ENCODE measurements at regions of chr6 and their contacts with region 1.

Region 1: DNA sequence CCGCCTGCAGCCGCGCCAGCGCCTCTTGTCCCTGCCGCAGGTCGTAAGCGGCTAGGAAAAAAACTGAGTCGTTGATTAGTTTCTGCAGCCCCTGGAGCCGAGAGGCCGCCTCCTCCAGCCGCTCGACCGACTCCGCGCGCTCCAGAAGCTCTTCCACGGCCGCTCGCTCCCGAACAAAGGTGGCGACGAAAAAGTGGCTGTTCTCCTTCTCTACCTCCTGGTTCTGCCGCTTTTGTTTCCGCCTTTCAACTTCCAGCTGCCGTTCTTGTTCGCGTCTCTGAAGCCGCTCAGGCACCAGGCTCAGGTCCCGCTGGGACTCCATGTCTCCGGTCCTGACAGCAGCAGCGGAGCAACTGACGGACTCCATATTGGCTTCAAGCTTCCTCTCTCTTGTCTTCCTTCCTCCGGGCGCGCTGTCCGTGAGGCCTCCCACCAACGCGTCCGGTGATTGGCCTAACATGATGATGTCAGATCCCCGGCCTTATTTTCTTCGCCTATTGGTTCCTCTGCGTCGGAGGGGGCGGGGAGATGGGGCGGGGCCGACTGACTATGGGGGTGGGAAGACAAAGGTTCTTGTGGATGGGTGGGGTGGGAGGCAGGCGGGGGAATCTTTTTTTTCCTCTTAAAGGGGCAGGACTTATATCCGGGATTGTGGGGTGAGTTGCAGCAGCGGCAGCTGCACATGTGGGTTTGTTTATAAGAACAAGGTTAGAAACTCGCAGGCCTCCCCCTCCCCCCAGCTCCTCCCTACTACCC is at the start of gene TBCC:
- DNase-seq: peak; percentile 86 to 98 (median 92)
- ATAC-seq: peak; percentile 77
- H3K4me3 ChIP-seq: peak within 1 kb of the TSS; percentile 96
- H3K4me3 Mint-ChIP-seq: peak within 1 kb of the TSS; percentile 100
- H3K27ac ChIP-seq: peak within 1 kb of the TSS; percentile 89 to 94
- H3K27ac Mint-ChIP-seq: peak within 1 kb of the TSS; percentile 96
- H3K4me1 ChIP-seq: peaks cover 43% of the 10 kb centered on the region
- H3K4me1 Mint-ChIP-seq: peaks cover 35% of the 10 kb centered on the region
- H3K27me3 ChIP-seq: no peaks in the 10 kb centered on the region
- H3K27me3 Mint-ChIP-seq: no peaks in the 10 kb centered on the region
- CTCF ChIP-seq: no peak
- total RNA-seq, gene TBCC: 67.3 to 68.3 TPM

Region 2: DNA sequence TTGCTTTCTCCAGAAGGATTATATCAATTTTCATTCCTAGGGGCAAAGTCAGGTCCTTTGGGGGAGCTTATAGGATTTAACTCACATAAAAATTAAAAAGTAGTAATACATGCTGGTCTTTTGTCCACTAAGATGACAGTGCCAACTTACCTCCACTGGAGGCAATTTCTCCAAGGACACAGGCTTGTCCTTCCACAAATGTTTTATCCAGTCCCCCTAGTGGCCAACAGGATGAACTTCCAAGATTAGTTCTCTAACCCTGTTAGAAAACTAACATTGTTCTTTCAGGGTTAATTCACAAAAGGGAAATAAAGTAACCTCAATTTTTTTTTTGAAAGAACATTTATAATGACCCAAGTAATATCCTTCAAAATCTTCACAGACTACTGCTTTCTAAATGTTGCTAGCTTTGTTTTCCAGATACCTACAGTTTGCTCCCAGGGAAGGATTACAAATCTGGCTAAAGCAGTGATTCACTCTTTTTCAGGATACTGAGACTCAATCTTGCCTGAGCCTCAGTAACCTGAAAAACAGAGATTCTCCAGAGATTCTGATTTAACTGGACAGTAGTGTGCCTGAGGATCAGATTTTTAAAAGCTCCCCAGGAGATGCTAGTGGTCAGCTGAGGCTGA is 213.7 kb before region 1 on chr6:
- CTCF ChIA-PET with region 1: no interaction called
- POLR2A ChIA-PET with region 1: no interaction called
- intact Hi-C with region 1: no loop called
- DNase-seq: peak in 5 of 14 experiments; percentile 5 to 73 (median 62)
- ATAC-seq: peak; percentile 54
- H3K4me3 ChIP-seq: no peak overlapping the region
- H3K4me3 Mint-ChIP-seq: no peak overlapping the region
- H3K27ac ChIP-seq: no peak overlapping the region
- H3K27ac Mint-ChIP-seq: no peak overlapping the region
- H3K4me1 ChIP-seq: no peaks in the 10 kb centered on the region
- H3K4me1 Mint-ChIP-seq: no peaks in the 10 kb centered on the region
- H3K27me3 ChIP-seq: no peaks in the 10 kb centered on the region
- H3K27me3 Mint-ChIP-seq: no peaks in the 10 kb centered on the region
- CTCF ChIP-seq: peak; percentile 91

Region 3: DNA sequence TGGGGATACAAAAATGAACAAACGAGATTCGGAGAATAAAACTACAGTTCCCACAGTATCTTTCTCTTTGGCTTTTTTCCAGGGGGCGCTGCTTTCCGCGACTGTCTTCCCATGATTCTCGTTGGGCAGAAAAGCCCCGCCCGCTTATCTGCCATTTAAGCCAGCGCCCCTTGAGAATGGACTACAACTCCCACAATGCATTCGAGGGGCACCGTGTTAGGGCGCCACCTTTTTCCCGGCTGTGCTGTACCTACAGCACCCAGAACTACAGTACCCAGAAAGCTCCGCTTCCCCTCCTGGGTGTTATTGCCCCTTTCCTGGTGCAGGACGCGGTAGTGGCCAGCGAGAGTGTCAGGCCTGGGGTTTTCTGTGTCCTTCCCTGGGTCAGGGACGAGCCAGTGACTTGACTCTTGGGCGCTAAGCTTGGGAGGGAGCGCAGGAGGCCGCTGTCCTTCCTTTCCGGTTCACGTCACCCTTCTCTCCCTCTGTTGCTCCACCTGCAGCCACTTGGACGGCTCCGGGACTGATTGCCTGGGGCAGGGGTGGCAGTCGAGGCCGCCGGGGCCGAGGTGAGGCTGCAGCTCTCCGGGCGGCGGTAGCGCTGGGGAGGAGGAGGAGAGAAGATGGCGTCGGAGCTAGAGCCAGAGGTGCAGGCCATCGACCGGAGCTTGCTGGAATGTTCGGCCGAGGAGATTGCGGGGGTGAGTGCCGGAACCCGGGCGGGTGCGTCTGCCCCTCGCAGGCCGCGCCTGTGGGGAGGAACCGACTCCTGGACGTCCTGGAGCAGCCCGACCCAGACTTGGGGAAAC is 182.0 kb before region 1 on chr6 and contains the start of gene UBR2:
- CTCF ChIA-PET with region 1: no interaction called
- POLR2A ChIA-PET with region 1: interaction called, 18 read pairs
- intact Hi-C with region 1: no loop called
- DNase-seq: peak; percentile 81 to 98 (median 90)
- ATAC-seq: peak; percentile 95
- H3K4me3 ChIP-seq: peak within 1 kb of the TSS; percentile 99
- H3K4me3 Mint-ChIP-seq: peak within 1 kb of the TSS; percentile 98
- H3K27ac ChIP-seq: peak within 1 kb of the TSS; percentile 87 to 93
- H3K27ac Mint-ChIP-seq: peak within 1 kb of the TSS; percentile 98
- H3K4me1 ChIP-seq: peaks cover 16% of the 10 kb centered on the region
- H3K4me1 Mint-ChIP-seq: peaks cover 38% of the 10 kb centered on the region
- H3K27me3 ChIP-seq: no peaks in the 10 kb centered on the region
- H3K27me3 Mint-ChIP-seq: no peaks in the 10 kb centered on the region
- CTCF ChIP-seq: peak; percentile 52
- total RNA-seq, gene UBR2: 27.4 to 27.7 TPM

Region 4: DNA sequence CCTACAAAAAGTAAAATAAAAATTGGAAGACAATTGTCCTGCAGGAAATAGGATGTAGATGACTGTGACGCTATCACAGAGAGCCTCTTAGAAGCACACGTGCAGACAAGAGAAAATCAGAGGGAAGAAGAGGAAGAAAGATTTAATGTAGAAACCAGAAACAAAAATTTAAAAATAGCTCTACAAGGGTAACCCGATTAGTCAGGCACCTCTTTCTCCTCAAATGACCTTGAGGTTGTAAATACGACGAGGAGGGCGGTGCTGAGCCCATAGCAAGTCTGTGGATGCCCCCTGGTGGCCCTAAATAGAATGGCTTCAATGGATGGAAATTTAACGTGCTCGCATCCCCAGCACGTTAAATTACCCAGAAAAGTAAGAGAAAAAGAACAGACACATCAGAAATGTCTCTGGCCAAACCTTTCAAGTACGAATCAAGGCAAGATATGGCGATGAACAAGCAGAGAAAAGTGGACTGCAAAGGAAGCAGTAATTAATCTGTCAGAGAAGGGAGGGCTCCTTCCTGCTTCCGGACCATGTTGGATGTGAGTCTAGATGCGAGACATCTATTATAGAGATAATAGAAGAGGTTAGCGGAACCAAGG is 19.3 kb before region 1 on chr6:
- CTCF ChIA-PET with region 1: interaction called, 22 read pairs
- POLR2A ChIA-PET with region 1: interaction called, 152 read pairs
- intact Hi-C with region 1: loop called (anchors 1 to 2 kb)
- DNase-seq: peak; percentile 54 to 95 (median 66)
- ATAC-seq: peak; percentile 97
- H3K4me3 ChIP-seq: peak overlapping the region; percentile 54
- H3K4me3 Mint-ChIP-seq: peak overlapping the region; percentile 87
- H3K27ac ChIP-seq: peak overlapping the region; percentile 64 to 65
- H3K27ac Mint-ChIP-seq: peak overlapping the region; percentile 90
- H3K4me1 ChIP-seq: peaks cover 14% of the 10 kb centered on the region
- H3K4me1 Mint-ChIP-seq: peaks cover 19% of the 10 kb centered on the region
- H3K27me3 ChIP-seq: no peaks in the 10 kb centered on the region
- H3K27me3 Mint-ChIP-seq: no peaks in the 10 kb centered on the region
- CTCF ChIP-seq: peak; percentile 90

Region 5: GRCh38 chr6:42771741-42772100 is 25.8 kb after region 1 on chr6:
- CTCF ChIA-PET with region 1: interaction called, 23 read pairs
- POLR2A ChIA-PET with region 1: interaction called, 1,427 read pairs
- intact Hi-C with region 1: loop called (anchors 1 kb)
- DNase-seq: peak in 8 of 14 experiments; percentile 20 to 84 (median 41)
- ATAC-seq: peak; percentile 27
- H3K4me3 ChIP-seq: peak overlapping the region; percentile 19
- H3K4me3 Mint-ChIP-seq: peak overlapping the region; percentile 76
- H3K27ac ChIP-seq: peak overlapping the region; percentile 92 to 94
- H3K27ac Mint-ChIP-seq: peak overlapping the region; percentile 99
- H3K4me1 ChIP-seq: peaks cover 75% of the 10 kb centered on the region
- H3K4me1 Mint-ChIP-seq: peaks cover 75% of the 10 kb centered on the region
- H3K27me3 ChIP-seq: no peaks in the 10 kb centered on the region
- H3K27me3 Mint-ChIP-seq: no peaks in the 10 kb centered on the region
- CTCF ChIP-seq: no peak

Region 6: DNA sequence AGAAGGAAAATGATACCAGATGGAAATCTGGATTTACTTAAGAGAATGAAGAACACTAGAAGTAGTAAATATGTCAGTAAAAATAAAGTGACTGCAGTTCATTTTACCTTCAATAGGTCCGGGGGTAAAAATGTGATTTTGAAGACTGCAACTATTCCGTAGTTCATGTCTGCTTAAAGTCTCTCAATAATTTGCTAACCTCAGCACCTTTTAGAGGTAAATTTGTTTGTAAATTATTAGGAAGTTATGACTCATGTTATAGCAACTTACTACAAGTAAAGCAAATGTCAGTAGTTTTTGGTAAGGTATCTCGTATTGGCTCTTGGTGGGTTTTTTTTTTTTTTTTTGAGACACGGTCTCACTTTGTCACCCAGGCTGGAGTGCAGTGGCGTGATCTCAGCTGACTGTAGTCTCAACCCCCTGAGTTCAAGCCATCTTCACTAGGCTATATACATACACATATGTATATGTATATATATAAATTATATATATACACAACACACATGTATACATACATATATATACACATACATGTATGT is 68.1 kb after region 1 on chr6:
- CTCF ChIA-PET with region 1: no interaction called
- POLR2A ChIA-PET with region 1: interaction called, 33 read pairs
- intact Hi-C with region 1: no loop called
- DNase-seq: no peak
- ATAC-seq: no peak
- H3K4me3 ChIP-seq: no peak overlapping the region
- H3K4me3 Mint-ChIP-seq: no peak overlapping the region
- H3K27ac ChIP-seq: no peak overlapping the region
- H3K27ac Mint-ChIP-seq: peak overlapping the region; percentile 39
- H3K4me1 ChIP-seq: no peaks in the 10 kb centered on the region
- H3K4me1 Mint-ChIP-seq: peaks cover 27% of the 10 kb centered on the region
- H3K27me3 ChIP-seq: no peaks in the 10 kb centered on the region
- H3K27me3 Mint-ChIP-seq: no peaks in the 10 kb centered on the region
- CTCF ChIP-seq: no peak

Region 7: DNA sequence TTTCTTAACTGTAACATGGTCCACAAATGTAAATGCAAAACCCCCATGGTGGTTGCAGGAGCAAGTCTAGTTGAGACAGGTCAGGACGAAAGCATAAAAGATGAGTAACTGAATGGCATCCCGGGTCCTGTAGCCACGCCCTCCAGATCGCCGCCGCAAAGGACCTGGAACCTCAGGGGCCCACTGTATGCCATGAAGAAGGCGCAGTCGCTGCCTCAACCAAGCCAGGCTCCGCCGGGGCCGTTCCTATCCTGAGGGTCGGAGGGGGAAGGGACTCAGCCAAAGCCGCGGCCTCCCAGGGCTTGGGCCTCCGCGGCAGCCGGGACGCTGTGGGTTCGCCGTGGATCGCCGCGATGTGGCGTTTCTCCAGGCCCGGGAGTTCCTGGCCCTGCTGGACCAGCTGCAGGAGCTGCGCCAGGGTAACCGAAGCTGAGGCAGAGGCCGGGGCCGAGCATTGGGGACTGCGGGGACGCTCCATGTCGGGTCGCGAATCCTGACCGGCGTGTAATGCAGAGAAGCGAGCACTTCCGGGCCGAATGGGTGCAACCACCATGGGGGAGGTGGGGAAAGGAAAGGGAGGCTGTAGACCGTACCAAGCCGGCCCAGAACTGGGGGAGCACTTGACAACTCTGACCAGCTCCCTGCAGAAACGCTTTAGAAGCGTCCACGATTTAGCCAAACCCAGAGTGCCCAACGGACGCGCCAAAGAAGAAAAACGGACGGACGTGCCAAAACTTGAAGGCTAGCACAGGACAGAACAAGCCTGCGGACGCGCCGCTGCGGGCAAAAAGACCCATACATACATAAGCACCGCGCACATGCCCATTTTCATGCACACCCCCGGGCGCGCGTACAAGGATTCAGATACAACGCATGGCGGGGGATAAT is 144.7 kb after region 1 on chr6:
- CTCF ChIA-PET with region 1: no interaction called
- POLR2A ChIA-PET with region 1: interaction called, 27 read pairs
- intact Hi-C with region 1: no loop called
- DNase-seq: peak; percentile 77 to 93 (median 87)
- ATAC-seq: peak; percentile 93
- H3K4me3 ChIP-seq: peak overlapping the region; percentile 94
- H3K4me3 Mint-ChIP-seq: peak overlapping the region; percentile 91
- H3K27ac ChIP-seq: peak overlapping the region; percentile 86 to 89
- H3K27ac Mint-ChIP-seq: peak overlapping the region; percentile 94
- H3K4me1 ChIP-seq: peaks cover 17% of the 10 kb centered on the region
- H3K4me1 Mint-ChIP-seq: peaks cover 16% of the 10 kb centered on the region
- H3K27me3 ChIP-seq: no peaks in the 10 kb centered on the region
- H3K27me3 Mint-ChIP-seq: no peaks in the 10 kb centered on the region
- CTCF ChIP-seq: no peak

Measured in CD4-positive, alpha-beta T cell (primary cell).